ENCODE measurements at regions of chr17 and their contacts with region 1.

Region 1: DNA sequence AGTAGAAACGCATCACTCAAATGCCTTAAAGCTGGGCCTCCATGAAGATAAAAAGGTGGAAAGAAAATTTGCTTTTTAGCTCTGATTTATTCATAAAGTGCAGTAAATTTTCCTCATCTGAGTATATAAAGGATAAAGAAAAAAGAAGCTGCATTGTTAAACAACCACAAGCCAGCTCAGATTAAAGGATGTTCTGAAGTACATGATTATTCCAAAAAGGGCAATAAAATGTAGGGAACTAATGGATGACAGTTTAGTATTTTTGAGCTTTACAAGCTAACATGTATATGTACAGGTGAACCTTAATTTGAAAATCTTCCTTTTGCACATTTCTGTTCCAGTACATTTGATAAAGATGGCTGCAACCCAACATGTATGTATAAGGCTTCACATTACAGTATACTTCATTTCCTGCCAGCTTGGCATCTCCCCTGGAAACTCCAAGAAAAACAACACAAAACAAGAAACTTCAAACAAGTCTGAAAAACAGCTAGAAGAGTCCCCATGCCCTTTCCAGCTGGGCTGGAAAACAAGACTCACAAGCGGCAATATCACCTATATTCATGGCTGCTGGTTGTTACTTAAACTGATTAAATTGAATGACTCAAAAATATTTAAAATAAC is 225.7 kb downstream of the CEP112 start:
- DNase-seq: no peak
- ATAC-seq: no peak
- H3K4me3 ChIP-seq: no peak overlapping the region
- H3K4me3 Mint-ChIP-seq: no peak overlapping the region
- H3K27ac ChIP-seq: no peak overlapping the region
- H3K27ac Mint-ChIP-seq: no peak overlapping the region
- H3K4me1 ChIP-seq: no peaks in the 10 kb centered on the region
- H3K4me1 Mint-ChIP-seq: no peaks in the 10 kb centered on the region
- H3K27me3 ChIP-seq: no peaks in the 10 kb centered on the region
- H3K27me3 Mint-ChIP-seq: no peaks in the 10 kb centered on the region
- CTCF ChIP-seq: no peak

Region 2: DNA sequence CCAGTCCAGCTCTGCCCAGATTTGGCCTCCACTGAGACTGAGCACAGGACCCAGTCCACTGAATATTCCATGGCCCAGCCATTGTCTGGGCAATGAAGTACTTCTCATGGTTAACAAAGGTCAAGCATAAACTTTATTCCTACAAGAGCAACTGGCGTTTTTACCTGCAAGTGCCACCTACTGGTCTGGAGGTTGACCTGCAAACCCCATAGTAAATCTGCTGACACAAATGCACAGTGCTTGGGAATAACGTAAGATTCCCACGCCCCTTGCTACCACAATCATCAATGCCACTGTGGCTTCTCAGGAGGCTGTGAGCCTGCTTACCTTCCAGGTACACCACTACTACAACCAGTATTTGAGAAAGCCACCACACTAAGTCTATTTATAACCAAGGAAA is 55.6 kb after region 1 on chr17:
- intact Hi-C with region 1: loop called (anchors 10 kb)
- DNase-seq: no peak
- ATAC-seq: no peak
- H3K4me3 ChIP-seq: no peak overlapping the region
- H3K4me3 Mint-ChIP-seq: no peak overlapping the region
- H3K27ac ChIP-seq: no peak overlapping the region
- H3K27ac Mint-ChIP-seq: no peak overlapping the region
- H3K4me1 ChIP-seq: no peaks in the 10 kb centered on the region
- H3K4me1 Mint-ChIP-seq: no peaks in the 10 kb centered on the region
- H3K27me3 ChIP-seq: no peaks in the 10 kb centered on the region
- H3K27me3 Mint-ChIP-seq: peaks cover 0 to 16% of the 10 kb centered on the region in 2 donors
- CTCF ChIP-seq: no peak